ENCODE measurements at regions of chr2 and their contacts with region 1.

Region 1: DNA sequence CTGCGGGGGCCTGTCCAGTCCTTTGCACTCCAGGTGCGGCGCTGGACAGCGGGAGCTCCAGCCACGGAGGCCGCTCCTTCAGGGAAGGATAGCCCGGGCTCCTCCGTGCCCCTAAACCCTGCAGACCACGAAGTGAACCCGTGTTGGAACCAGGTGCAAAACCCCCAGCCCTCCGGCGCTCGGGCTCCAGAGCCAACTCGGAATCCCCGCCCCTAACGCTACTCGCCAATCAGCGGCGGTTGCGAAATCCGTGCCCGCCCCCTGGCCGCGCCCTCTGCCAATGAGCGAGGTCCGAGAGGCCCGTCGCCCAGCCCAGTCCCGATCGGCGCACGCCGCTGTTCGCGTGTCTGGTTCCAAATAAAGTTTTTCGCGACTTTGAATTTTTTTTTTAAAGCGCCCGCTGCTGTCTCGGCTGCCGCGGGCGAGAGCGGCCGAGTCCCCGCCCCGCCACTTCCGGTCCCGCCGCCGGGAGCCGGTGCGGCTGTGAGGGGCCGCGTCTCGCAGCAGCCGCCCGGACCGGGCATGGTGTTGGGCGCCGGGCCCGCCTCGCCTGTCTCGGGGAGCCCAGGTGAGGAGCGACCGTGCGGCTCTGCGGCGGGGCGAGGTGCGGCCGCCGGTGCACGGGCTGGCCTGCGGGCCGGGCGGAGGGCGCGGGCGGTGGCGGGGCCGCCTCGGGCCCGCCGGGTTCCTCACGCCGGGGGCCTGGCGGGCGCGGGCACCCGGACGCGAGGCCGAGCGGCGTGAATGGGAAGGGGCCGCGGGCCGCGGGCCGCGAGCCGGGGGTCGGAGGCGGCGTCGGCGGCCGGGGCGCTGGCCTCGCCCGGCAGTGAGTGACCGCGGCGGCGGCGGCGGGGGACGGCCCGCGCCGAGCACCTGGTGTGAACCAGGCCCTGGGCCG is at the start of gene UBE2F:
- DNase-seq: peak; percentile 76
- ATAC-seq: peak; percentile 97
- H3K4me3 ChIP-seq: peak within 1 kb of the TSS; percentile 76
- H3K27ac ChIP-seq: 0 out of 2 replicates have a peak within 1 kb of the TSS, but pooled peaks have one; percentile 8
- H3K4me1 ChIP-seq: peaks cover 19% of the 10 kb centered on the region
- H3K27me3 ChIP-seq: no peaks in the 10 kb centered on the region; a peak in 1 of 4 replicates
- CTCF ChIP-seq: no peak
- EP300 ChIP-seq: no peak
- POLR2A ChIP-seq: peak; percentile 78
- RAD21 ChIP-seq: no peak
- polyA plus RNA-seq, gene UBE2F: 12.3 to 21.9 TPM

Region 2: GRCh38 chr2:237714690-237715458 is 251.9 kb before region 1 on chr2:
- CTCF ChIA-PET with region 1: no interaction called
- POLR2A ChIA-PET with region 1: no interaction called
- RAD21 ChIA-PET with region 1: no interaction called
- SMC1A ChIA-PET with region 1: no interaction called
- in situ Hi-C with region 1: no loop called
- intact Hi-C with region 1: no loop called
- DNase-seq: no peak
- ATAC-seq: no peak
- H3K4me3 ChIP-seq: no peak overlapping the region
- H3K27ac ChIP-seq: no peak overlapping the region
- H3K4me1 ChIP-seq: no peaks in the 10 kb centered on the region
- H3K27me3 ChIP-seq: no peaks in the 10 kb centered on the region
- CTCF ChIP-seq: no peak
- EP300 ChIP-seq: no peak
- POLR2A ChIP-seq: no peak
- RAD21 ChIP-seq: no peak

Region 3: GRCh38 chr2:237998530-237998929 is 31.7 kb after region 1 on chr2:
- CTCF ChIA-PET with region 1: interaction called, 15 read pairs
- POLR2A ChIA-PET with region 1: interaction called, 4 read pairs
- RAD21 ChIA-PET with region 1: interaction called, 28 read pairs
- SMC1A ChIA-PET with region 1: interaction called, 28 read pairs
- in situ Hi-C with region 1: no loop called
- intact Hi-C with region 1: no loop called
- DNase-seq: peak; percentile 82
- ATAC-seq: peak; percentile 98
- H3K4me3 ChIP-seq: peak overlapping the region; percentile 41; the same call in 1 of the 2 replicates
- H3K27ac ChIP-seq: 0 out of 2 replicates have a peak overlapping the region, but pooled peaks have one; percentile 1
- H3K4me1 ChIP-seq: no peaks in the 10 kb centered on the region
- H3K27me3 ChIP-seq: no peaks in the 10 kb centered on the region
- CTCF ChIP-seq: no peak
- EP300 ChIP-seq: peak; percentile 91 to 92
- POLR2A ChIP-seq: no peak
- RAD21 ChIP-seq: no peak

Region 4: GRCh38 chr2:238060542-238061314 is 93.9 kb after region 1 on chr2 and contains the start of gene SCLY:
- CTCF ChIA-PET with region 1: interaction called, 4 read pairs
- POLR2A ChIA-PET with region 1: interaction called, 3 read pairs
- RAD21 ChIA-PET with region 1: interaction called, 4 read pairs
- SMC1A ChIA-PET with region 1: no interaction called
- in situ Hi-C with region 1: no loop called
- intact Hi-C with region 1: loop called (anchors 5 kb)
- DNase-seq: peak; percentile 87
- ATAC-seq: peak; percentile 97
- H3K4me3 ChIP-seq: peak within 1 kb of the TSS; percentile 96
- H3K27ac ChIP-seq: peak within 1 kb of the TSS; percentile 76
- H3K4me1 ChIP-seq: no peaks in the 10 kb centered on the region; the same call in none of the 2 replicates
- H3K27me3 ChIP-seq: no peaks in the 10 kb centered on the region
- CTCF ChIP-seq: no peak
- EP300 ChIP-seq: no peak
- POLR2A ChIP-seq: peak; percentile 93
- RAD21 ChIP-seq: no peak
- polyA plus RNA-seq, gene SCLY: 3.3 to 3.6 TPM

Region 5: GRCh38 chr2:238139196-238140039 is 172.6 kb after region 1 on chr2:
- CTCF ChIA-PET with region 1: interaction called, 11 read pairs
- POLR2A ChIA-PET with region 1: no interaction called
- RAD21 ChIA-PET with region 1: interaction called, 4 read pairs
- SMC1A ChIA-PET with region 1: no interaction called
- in situ Hi-C with region 1: no loop called
- intact Hi-C with region 1: no loop called
- DNase-seq: no peak
- ATAC-seq: peak; percentile 75
- H3K4me3 ChIP-seq: no peak overlapping the region
- H3K27ac ChIP-seq: no peak overlapping the region
- H3K4me1 ChIP-seq: peaks cover 4% of the 10 kb centered on the region; the same call in 1 of the 2 replicates
- H3K27me3 ChIP-seq: no peaks in the 10 kb centered on the region
- CTCF ChIP-seq: peak; percentile 53 to 81 (median 67)
- EP300 ChIP-seq: no peak
- POLR2A ChIP-seq: no peak
- RAD21 ChIP-seq: peak; percentile 38

Region 6: GRCh38 chr2:238263204-238264071 is 296.6 kb after region 1 on chr2:
- CTCF ChIA-PET with region 1: interaction called, 18 read pairs
- POLR2A ChIA-PET with region 1: no interaction called
- RAD21 ChIA-PET with region 1: interaction called, 6 read pairs
- SMC1A ChIA-PET with region 1: interaction called, 8 read pairs
- in situ Hi-C with region 1: no loop called
- intact Hi-C with region 1: loop called (anchors 2 kb)
- DNase-seq: peak; percentile 15
- ATAC-seq: peak; percentile 96
- H3K4me3 ChIP-seq: no peak overlapping the region
- H3K27ac ChIP-seq: no peak overlapping the region
- H3K4me1 ChIP-seq: no peaks in the 10 kb centered on the region
- H3K27me3 ChIP-seq: no peaks in the 10 kb centered on the region
- CTCF ChIP-seq: peak; percentile 78 to 85 (median 80)
- EP300 ChIP-seq: no peak
- POLR2A ChIP-seq: no peak
- RAD21 ChIP-seq: peak; percentile 67

Measured in GM12878 (cell line).